MCF 10A (cell line): ENCODE measurements at regions of chr7 and their contacts with region 1.

Region 1: DNA sequence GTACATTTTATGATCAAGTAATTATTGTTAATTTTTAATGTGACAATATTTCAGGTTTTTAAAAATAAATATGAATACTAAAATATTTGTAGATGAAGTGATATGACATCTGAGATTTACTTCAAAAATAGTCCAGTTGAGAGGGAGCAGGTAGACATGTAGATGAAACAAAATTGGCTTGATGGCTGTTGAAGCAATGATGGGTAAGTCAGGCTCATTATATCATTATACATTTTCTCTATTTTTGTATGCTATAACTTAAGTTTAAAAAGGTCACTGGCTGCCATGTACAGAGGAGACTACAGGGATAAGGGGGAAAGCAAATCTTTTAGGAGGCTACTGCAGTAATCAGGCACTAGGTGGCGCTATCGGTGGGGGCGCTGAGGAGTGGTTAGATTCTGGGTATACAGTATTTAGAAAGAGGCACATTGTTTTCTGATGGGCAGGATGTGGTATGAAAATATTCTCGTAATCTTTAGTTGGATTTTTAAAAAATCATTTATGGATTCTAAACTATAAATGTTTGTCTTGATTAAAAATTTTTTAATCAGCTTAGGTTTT is 189.8 kb upstream of the IMMP2L start:
- DNase-seq: peak; percentile 75
- H3K4me3 Mint-ChIP-seq: no peak overlapping the region
- H3K27ac Mint-ChIP-seq: no peak overlapping the region
- H3K4me1 Mint-ChIP-seq: peaks cover 6% of the 10 kb centered on the region
- H3K27me3 Mint-ChIP-seq: no peaks in the 10 kb centered on the region
- CTCF ChIP-seq: peak; percentile 81

Region 2: DNA sequence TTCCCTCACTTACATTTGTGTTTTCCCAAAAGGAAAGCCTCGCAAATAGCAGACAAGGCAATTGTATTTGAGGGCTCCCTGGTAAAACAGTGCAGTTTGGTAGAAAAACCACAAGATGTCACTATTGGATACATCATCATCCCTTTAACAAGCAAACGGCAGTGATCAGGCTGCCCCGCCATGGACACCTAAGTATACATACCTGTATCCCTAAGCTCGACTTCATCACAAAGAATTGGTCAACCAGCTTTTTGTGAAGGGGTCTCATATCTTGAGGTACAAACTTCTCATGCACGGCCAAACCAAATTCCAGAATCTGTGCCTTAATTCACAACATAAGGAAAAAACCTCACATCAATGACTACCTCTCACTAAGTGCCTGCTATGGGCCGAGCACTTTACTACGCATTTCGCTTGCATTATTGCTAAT is 10.3 kb before region 1 on chr7:
- CTCF ChIA-PET with region 1: interaction called, 40 read pairs
- POLR2A ChIA-PET with region 1: no interaction called
- intact Hi-C with region 1: no loop called
- DNase-seq: peak; percentile 78
- H3K4me3 Mint-ChIP-seq: no peak overlapping the region
- H3K27ac Mint-ChIP-seq: no peak overlapping the region
- H3K4me1 Mint-ChIP-seq: no peaks in the 10 kb centered on the region
- H3K27me3 Mint-ChIP-seq: no peaks in the 10 kb centered on the region
- CTCF ChIP-seq: peak; percentile 64

Region 3: GRCh38 chr7:111763221-111763801 is 11.2 kb after region 1 on chr7:
- CTCF ChIA-PET with region 1: interaction called, 40 read pairs
- POLR2A ChIA-PET with region 1: no interaction called
- intact Hi-C with region 1: no loop called
- DNase-seq: peak; percentile 63
- H3K4me3 Mint-ChIP-seq: no peak overlapping the region
- H3K27ac Mint-ChIP-seq: no peak overlapping the region
- H3K4me1 Mint-ChIP-seq: no peaks in the 10 kb centered on the region
- H3K27me3 Mint-ChIP-seq: no peaks in the 10 kb centered on the region
- CTCF ChIP-seq: peak; percentile 50

Region 4: DNA sequence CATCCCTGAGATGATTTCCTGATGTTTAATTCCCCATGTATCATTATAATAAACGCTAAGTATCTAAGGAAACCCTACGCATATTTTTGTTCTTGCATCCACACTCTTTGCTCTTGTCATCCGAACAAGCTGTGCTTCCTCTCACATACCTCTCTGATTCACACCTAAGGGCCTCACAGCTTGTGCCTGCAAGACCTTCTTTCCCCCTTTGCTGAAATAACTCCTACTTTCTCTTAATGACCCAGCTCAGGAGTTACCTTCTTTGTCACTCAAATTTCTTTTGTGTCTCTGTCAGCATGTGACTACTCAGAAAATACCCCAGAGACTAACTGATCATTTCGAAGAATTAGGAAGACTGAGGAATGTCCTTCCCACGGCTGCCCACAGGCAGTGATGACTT is 19.5 kb after region 1 on chr7:
- CTCF ChIA-PET with region 1: interaction called, 19 read pairs
- POLR2A ChIA-PET with region 1: no interaction called
- intact Hi-C with region 1: no loop called
- DNase-seq: no peak
- H3K4me3 Mint-ChIP-seq: no peak overlapping the region
- H3K27ac Mint-ChIP-seq: no peak overlapping the region
- H3K4me1 Mint-ChIP-seq: no peaks in the 10 kb centered on the region
- H3K27me3 Mint-ChIP-seq: no peaks in the 10 kb centered on the region
- CTCF ChIP-seq: no peak

Region 5: DNA sequence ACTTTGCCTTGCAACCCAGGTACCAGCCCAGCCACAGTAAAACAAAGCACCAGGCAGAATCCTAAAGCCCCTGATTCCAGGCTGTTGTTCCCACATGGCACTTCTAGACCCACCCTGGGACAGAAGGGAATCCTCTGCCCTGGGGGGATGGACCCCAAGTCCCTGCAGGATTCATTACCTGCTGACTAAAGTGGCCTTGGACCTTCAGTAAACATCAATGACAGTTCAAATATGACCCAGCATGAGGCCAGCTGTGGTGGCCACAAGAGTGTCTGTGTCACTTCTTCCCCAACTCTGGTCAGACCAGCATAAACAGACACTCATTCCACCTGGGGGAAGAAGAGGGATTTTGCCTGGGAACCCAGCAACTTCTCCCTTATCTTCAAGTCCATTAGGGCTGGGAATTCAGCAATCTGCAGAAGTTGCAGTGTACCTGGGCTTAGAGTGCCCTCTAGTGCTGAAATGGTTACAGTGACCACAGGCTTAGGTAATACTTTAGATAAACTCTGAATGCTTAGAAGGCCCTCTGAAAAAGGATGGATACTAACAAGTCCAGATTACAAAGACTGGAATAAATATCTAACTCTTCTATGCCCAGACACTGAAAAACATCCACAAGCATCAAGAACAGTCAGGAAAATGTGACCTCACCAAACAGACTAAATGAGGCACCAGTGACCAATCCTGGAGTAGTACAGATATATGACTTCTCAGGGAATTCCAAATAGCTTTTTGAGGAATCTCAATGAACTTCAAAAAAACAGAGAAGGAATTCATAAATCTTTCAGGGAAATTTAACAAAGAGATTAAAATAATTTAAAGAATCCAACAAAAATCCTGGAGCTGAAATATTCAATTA is 1146.6 kb after region 1 on chr7:
- CTCF ChIA-PET with region 1: no interaction called
- POLR2A ChIA-PET with region 1: no interaction called
- intact Hi-C with region 1: loop called (anchors 5 kb)
- DNase-seq: peak; percentile 78
- H3K4me3 Mint-ChIP-seq: no peak overlapping the region
- H3K27ac Mint-ChIP-seq: peak overlapping the region; percentile 19
- H3K4me1 Mint-ChIP-seq: no peaks in the 10 kb centered on the region
- H3K27me3 Mint-ChIP-seq: no peaks in the 10 kb centered on the region
- CTCF ChIP-seq: peak; percentile 80